CD8-positive, alpha-beta memory T cell (primary cell): ENCODE measurements at regions of chr3 and their contacts with region 1.

Region 1: GRCh38 chr3:51391075-51391567 is at the start of gene RBM15B:
- DNase-seq: peak; percentile 96 to 98 (median 97)
- H3K4me3 ChIP-seq: peak within 1 kb of the TSS; percentile 56
- H3K4me3 Mint-ChIP-seq: peak within 1 kb of the TSS; percentile 79 to 93 (median 83)
- H3K27ac ChIP-seq: peak within 1 kb of the TSS; percentile 61
- H3K27ac Mint-ChIP-seq: peak within 1 kb of the TSS; percentile 88 to 96 (median 92)
- H3K4me1 ChIP-seq: peaks cover 71% of the 10 kb centered on the region
- H3K4me1 Mint-ChIP-seq: peaks cover 54 to 81% (median 66%) of the 10 kb centered on the region in 3 donors
- H3K27me3 ChIP-seq: no peaks in the 10 kb centered on the region
- H3K27me3 Mint-ChIP-seq: no peaks in the 10 kb centered on the region
- total RNA-seq, gene RBM15B: 47.4 to 47.8 TPM

Region 2: DNA sequence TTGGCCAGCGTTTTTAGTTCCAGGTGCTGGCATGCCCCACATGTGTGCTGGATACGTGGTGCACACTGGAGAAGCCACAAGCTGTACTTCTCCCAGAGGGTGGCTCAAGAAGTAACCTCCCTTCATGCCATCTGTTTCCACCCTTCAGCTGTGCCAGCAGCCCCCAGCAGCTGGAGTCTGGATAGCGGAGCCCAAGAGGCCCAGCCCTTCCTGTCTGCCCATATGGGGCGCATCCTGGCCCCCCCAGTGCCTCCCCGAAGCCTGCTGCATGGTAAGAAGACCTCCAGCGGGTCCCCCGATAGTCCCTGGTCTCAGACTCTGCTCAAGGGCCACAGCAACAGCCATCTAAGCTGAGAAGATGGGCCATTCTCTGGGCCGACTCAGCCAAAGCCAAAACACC is 11.8 kb before region 1 on chr3:
- CTCF ChIA-PET with region 1: interaction called, 21 read pairs
- POLR2A ChIA-PET with region 1: interaction called, 5 read pairs
- DNase-seq: no peak
- H3K4me3 ChIP-seq: no peak overlapping the region
- H3K4me3 Mint-ChIP-seq: no peak overlapping the region
- H3K27ac ChIP-seq: no peak overlapping the region
- H3K27ac Mint-ChIP-seq: peak overlapping the region in 1 of 8 donors; percentile 68
- H3K4me1 ChIP-seq: peaks cover 15% of the 10 kb centered on the region
- H3K4me1 Mint-ChIP-seq: peaks cover 7 to 15% (median 13%) of the 10 kb centered on the region in 3 donors
- H3K27me3 ChIP-seq: no peaks in the 10 kb centered on the region
- H3K27me3 Mint-ChIP-seq: peaks cover 2% of the 10 kb centered on the region in 2 donors

Region 3: DNA sequence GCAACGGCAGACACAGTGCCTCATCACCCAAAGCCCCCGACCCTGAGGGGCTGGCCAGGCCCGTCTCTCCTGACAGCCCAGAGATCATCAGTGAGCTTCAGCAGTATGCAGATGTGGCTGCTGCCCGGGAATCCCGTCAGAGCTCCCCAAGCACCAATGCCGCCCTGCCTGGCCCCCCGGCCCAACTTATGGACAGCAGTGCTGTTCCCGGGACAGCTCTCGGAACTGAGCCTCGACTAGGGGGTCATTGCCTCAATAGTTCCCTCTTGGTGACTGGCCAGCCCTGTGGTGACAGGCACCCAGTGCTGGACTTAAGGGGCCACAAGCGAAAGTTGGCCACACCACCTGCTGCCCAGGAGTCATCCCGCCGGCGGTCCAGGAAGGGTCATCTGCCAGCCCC is 271.3 kb after region 1 on chr3:
- CTCF ChIA-PET with region 1: no interaction called
- POLR2A ChIA-PET with region 1: no interaction called
- DNase-seq: no peak
- H3K4me3 ChIP-seq: no peak overlapping the region
- H3K4me3 Mint-ChIP-seq: no peak overlapping the region
- H3K27ac ChIP-seq: no peak overlapping the region
- H3K27ac Mint-ChIP-seq: peak overlapping the region in 2 of 8 donors; percentile 36 to 59
- H3K4me1 ChIP-seq: no peaks in the 10 kb centered on the region
- H3K4me1 Mint-ChIP-seq: no peaks in the 10 kb centered on the region
- H3K27me3 ChIP-seq: no peaks in the 10 kb centered on the region
- H3K27me3 Mint-ChIP-seq: no peaks in the 10 kb centered on the region